Breast epithelium (tissue), 4 donors: ENCODE measurements at regions of chr11 and their contacts with region 1.

Region 1: DNA sequence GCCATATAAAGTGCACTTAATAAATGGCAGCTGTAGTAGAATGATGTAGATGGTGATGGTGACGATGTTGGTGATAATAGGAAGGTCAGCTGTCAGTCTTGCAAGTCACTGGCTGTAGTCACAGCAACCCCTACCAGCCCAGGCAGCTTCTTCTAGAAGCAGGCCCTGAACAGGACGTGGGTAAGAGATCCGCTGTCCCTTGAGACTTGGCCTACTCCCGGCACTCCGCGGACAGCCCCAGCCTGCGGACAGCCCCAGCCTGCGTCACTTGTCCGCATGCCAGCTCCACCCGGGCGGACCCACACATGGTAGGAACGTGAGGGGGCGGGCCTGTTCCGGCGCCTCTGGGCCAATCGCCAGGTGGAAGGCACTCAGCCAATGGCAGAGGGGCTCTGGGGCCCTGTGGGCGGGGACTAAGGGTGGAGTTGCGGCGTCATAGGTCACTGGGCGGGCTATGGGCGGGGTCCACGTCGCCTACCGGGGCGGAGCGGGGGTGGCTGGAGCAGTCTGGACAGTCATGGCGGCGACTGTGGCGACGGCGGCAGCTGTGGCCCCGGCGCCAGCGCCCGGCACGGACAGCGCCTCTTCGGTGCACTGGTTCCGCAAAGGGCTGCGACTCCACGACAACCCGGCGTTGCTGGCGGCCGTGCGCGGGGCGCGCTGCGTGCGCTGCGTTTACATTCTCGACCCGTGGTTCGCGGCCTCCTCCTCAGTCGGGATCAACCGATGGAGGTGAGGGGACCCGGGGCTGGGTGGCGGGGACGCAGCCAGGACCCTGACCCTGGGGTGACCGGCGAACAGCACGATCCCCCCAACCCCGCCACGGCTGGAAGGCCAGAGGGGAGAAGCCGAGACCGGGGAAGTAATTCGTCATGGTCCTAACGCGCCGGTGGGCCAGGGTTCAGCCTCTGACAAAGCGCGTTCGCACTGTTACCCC is at the start of gene CRY2:
- DNase-seq: peak; percentile 99 to 100
- H3K4me3 ChIP-seq: peak within 1 kb of the TSS; percentile 79 to 91 (median 89)
- H3K27ac ChIP-seq: peak within 1 kb of the TSS; percentile 96 to 97
- H3K4me1 ChIP-seq: peaks cover 2 to 22% of the 10 kb centered on the region in 2 donors
- H3K27me3 ChIP-seq: no peaks in the 10 kb centered on the region
- CTCF ChIP-seq: peak in 1 of 3 donors; percentile 22
- POLR2A ChIP-seq: peak; percentile 82
- total RNA-seq, gene CRY2: 44.2 to 54.1 (median 44.3) TPM

Region 2: DNA sequence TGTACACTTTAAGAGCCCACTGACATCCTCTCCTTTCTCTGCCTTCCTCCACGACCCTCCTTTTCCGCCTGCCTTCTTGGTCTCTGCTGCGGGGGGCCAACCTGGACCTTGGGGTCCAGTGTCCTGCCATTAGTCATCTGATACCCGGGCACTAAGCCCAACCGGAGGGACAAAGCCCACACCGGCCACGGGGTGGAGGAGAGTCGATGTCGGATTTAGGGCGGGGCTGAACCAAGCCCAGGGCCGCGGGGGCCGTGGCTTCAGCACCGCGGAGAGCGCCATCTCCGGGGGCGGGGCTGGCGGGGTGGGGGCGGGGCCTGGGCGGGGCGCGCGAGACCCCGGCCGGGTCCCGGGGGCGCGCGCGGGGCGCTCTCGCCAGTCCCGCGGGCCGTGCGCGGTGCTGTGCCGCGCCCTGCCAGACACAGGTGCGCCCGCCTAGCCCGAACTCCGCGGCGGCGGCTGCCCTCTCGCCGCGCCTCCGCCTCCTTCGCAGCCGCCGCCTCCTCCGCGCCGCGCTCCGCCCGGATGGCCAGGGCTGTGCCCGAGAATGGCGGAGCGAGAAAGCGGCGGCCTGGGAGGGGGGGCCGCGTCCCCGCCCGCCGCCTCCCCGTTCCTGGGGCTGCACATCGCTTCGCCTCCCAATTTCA is 38.2 kb after region 1 on chr11 and contains the start of gene MAPK8IP1:
- intact Hi-C with region 1: no loop called
- DNase-seq: no peak
- H3K4me3 ChIP-seq: peak within 1 kb of the TSS; percentile 43 to 76 (median 54)
- H3K27ac ChIP-seq: no peak within 1 kb of the TSS
- H3K4me1 ChIP-seq: no peaks in the 10 kb centered on the region
- H3K27me3 ChIP-seq: no peaks in the 10 kb centered on the region
- CTCF ChIP-seq: no peak
- POLR2A ChIP-seq: no peak
- total RNA-seq, gene MAPK8IP1: 5.4 to 7.2 (median 5.9) TPM

Region 3: DNA sequence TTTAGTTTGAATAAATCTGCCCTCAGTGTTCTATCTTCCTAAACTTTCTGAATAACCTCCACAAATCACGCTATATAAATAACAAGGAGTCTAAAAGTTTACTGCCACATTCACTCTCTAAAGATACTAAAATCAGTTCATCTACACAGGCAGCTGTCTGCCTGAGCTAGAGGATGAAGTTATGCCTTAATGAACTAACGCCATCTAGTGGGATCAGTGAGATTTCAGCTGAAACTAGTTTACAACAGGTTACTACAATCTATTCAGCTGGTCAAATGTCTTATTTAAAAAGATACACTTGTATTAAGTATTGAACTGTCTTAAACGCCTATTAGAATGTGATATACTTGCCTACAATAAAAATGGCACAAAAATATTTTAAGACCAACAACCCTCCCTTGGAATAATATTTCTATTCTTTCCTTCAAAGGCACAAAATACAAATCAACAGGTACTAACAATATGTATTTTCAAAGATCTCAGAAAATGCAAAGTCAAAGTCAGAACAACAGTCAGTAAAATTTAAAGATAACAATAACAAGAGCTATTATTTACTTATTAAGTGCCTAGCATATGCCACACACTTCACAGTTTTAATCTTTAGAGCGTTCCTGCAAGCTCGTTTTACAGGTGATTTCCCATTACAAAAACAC is 159.3 kb after region 1 on chr11:
- intact Hi-C with region 1: loop called (anchors 10 kb)
- DNase-seq: no peak
- H3K4me3 ChIP-seq: no peak overlapping the region
- H3K27ac ChIP-seq: no peak overlapping the region
- H3K4me1 ChIP-seq: no peaks in the 10 kb centered on the region
- H3K27me3 ChIP-seq: no peaks in the 10 kb centered on the region
- CTCF ChIP-seq: peak in 2 of 3 donors; percentile 60 to 69
- POLR2A ChIP-seq: no peak